Head of caudate nucleus (tissue), 42 donors: ENCODE measurements at regions of chr12 and their contacts with region 1.

Region 1: GRCh38 chr12:1587927-1588574 is 6.3 kb downstream of the FBXL14 start:
- DNase-seq: no peak

Region 2: GRCh38 chr12:1117970-1118563 is 470.0 kb before region 1 on chr12:
- intact Hi-C with region 1: loop called (anchors 5 kb)
- DNase-seq: peak in 41 of 42 donors; percentile 37 to 90 (median 72)